WTC11 (cell line): ENCODE measurements at regions of chr14 and their contacts with region 1.

Region 1: DNA sequence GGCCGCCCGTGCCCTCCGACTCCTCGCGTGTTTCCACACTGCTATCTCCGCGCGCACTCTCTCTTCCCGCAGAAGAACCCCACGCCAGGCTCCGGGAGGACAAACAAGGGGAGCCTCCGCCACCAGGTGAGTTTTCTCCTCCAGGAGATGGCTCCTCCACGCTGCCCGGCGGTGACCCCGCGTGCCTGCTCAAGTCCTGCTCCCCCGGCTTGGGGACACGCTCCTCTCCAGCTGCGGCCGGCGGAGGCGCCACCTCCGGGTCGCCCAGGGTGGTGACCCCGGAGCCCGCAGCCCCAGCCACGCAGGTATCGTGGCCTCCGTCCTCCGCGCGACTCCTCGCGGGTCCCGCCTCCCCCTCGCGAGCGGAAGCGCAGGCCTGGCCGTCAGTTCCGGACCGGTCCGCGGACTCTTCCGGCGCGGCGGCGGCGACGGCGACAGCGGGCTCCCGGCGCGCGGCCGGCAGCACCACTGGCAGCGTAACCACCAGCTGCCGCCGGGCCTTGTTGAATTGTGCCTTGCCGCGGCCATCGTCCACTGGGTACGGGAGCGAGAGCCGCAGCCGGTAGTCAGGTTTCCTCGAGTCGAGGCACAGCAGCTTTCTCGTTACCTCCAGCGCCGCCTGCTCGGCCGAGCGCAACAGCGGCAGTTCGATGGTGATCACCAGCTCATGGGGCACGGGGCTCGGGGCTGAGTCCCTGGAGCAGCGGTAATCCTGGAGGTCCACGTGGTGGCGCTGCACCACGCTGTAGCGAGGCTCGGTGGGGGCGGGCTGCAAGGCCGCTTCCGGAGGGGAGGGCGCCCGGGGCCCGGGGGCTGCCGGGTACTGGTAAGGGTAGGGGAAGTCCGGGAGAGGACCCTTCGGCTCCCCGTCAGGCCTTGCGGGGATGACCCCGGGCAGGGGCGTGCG is 1.2 kb downstream of the DNAAF2 start:
- DNase-seq: peak; percentile 96
- ATAC-seq: peak; percentile 91
- H3K4me3 Mint-ChIP-seq: peak overlapping the region; percentile 96
- H3K27ac Mint-ChIP-seq: peak overlapping the region; percentile 98
- H3K4me1 Mint-ChIP-seq: peaks cover 25% of the 10 kb centered on the region
- H3K27me3 Mint-ChIP-seq: no peaks in the 10 kb centered on the region
- CTCF ChIP-seq: peak; percentile 79

Region 2: GRCh38 chr14:49620182-49621113 is 13.4 kb before region 1 on chr14 and contains the starts of genes MGAT2 and RPL36AL:
- CTCF ChIA-PET with region 1: interaction called, 24 read pairs
- POLR2A ChIA-PET with region 1: interaction called, 39 read pairs
- DNase-seq: peak; percentile 99
- ATAC-seq: peak; percentile 98
- H3K4me3 Mint-ChIP-seq: peak within 1 kb of the TSS; percentile 98
- H3K27ac Mint-ChIP-seq: peak within 1 kb of the TSS; percentile 98
- H3K4me1 Mint-ChIP-seq: peaks cover 23% of the 10 kb centered on the region
- H3K27me3 Mint-ChIP-seq: no peaks in the 10 kb centered on the region
- CTCF ChIP-seq: no peak
- total RNA-seq, gene MGAT2: 24.5 to 27.7 TPM (median 25.2 TPM) in 3 replicates
- total RNA-seq, gene RPL36AL: 173 to 212 TPM (median 177 TPM) in 3 replicates

Region 3: GRCh38 chr14:49687942-49688700 is 54.2 kb after region 1 on chr14 and contains the start of gene POLE2:
- CTCF ChIA-PET with region 1: interaction called, 13 read pairs
- POLR2A ChIA-PET with region 1: interaction called, 12 read pairs
- DNase-seq: peak; percentile 87
- ATAC-seq: peak; percentile 94
- H3K4me3 Mint-ChIP-seq: peak within 1 kb of the TSS; percentile 86
- H3K27ac Mint-ChIP-seq: peak within 1 kb of the TSS; percentile 96
- H3K4me1 Mint-ChIP-seq: peaks cover 34% of the 10 kb centered on the region
- H3K27me3 Mint-ChIP-seq: peaks cover 34% of the 10 kb centered on the region
- CTCF ChIP-seq: no peak
- total RNA-seq, gene POLE2: 24.0 to 24.6 TPM (median 24.4 TPM) in 3 replicates

Region 4: DNA sequence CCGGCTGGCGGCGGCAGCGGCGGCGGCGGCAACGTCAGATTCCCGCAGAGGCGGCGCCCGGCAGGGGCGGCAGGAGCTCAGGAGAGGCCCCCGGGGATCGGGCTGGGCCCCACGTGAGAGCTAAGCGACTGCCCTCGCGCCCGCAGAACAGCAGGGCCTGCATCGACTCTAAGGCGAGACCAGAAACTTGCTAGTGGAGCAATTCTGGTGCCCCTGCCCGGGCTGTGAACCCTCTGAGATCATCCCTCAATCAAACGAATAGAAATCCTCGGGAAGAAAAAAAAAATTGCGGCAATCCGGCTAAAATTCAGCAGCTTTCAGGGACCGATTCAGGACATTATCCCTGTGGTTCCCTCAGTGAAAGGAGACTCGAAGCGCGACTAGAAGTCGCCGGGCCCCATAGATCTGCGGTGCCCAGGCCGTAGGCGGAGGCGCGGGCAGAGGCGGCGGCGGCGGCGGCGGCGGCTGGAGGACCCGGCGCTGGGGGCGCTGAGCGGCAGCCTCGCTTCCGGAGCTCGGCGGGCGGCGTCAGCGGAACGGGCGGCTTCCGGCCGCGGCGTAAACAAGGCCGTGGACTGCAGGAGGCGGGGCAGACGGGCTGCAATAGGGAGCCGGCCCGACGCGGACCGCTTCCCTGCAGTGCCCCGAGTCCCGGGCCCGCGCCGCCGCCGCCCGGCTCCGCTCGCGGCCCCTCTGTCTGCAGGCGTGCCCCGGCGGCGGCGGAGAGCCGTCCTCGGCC is 133.8 kb after region 1 on chr14 and contains the start of gene KLHDC2:
- CTCF ChIA-PET with region 1: interaction called, 23 read pairs
- POLR2A ChIA-PET with region 1: interaction called, 17 read pairs
- DNase-seq: peak; percentile 87
- ATAC-seq: peak; percentile 88
- H3K4me3 Mint-ChIP-seq: peak within 1 kb of the TSS; percentile 98
- H3K27ac Mint-ChIP-seq: peak within 1 kb of the TSS; percentile 100
- H3K4me1 Mint-ChIP-seq: peaks cover 24% of the 10 kb centered on the region
- H3K27me3 Mint-ChIP-seq: no peaks in the 10 kb centered on the region
- CTCF ChIP-seq: no peak
- total RNA-seq, gene KLHDC2: 38.7 to 47.6 TPM (median 42.5 TPM) in 3 replicates

Region 5: DNA sequence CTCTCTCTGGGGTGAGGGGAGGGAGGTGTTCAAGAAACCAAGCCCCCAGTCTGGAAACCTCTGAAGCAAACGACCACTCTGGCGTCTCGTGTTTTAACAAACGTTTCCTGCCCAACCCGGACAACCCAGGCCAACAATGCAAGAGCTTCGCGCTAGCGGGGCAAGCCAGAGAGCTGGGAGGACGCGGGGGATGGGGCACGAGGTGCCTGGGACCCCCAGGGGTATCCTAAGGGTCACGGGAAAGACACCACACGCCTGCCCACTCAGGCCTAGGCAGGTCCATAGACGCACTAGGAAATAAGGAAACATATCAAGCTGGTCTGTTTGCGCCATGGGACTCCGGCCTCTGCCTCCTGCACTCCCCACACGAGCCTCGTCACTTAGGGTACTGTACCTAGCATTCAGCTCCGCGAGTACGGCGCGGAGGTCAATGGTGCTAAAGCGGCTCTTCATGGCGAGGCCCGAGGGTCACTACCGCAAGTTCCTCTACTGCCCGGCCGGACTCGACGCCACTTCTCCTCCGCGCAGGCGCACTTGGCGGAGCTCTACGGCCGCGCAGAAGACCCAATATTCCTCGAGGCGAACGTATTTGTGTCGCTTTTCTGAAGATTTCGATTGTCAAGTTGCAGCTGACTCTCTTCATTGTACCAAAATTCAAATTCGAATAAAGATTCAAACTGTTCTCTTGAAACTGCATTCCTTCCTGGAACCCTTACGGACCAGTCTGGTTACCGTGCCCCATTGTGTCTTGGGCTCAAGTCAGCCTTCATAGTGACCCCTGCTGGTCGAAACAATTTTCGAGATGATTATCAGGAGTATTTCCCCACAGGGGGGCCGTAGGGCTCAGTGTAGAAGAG is 218.6 kb after region 1 on chr14 and contains the start of gene NEMF:
- CTCF ChIA-PET with region 1: interaction called, 31 read pairs
- POLR2A ChIA-PET with region 1: no interaction called
- DNase-seq: peak; percentile 82
- ATAC-seq: peak; percentile 72
- H3K4me3 Mint-ChIP-seq: peak within 1 kb of the TSS; percentile 95
- H3K27ac Mint-ChIP-seq: peak within 1 kb of the TSS; percentile 95
- H3K4me1 Mint-ChIP-seq: peaks cover 10% of the 10 kb centered on the region
- H3K27me3 Mint-ChIP-seq: no peaks in the 10 kb centered on the region
- CTCF ChIP-seq: no peak
- total RNA-seq, gene NEMF: 50.1 to 51.2 TPM (median 50.1 TPM) in 3 replicates

Region 6: GRCh38 chr14:50798048-50798421 is 1164.1 kb after region 1 on chr14:
- CTCF ChIA-PET with region 1: no interaction called
- POLR2A ChIA-PET with region 1: interaction called, 10 read pairs
- DNase-seq: no peak
- ATAC-seq: 0 out of 2 replicates have a peak, but pooled peaks have one; percentile 22
- H3K4me3 Mint-ChIP-seq: no peak overlapping the region
- H3K27ac Mint-ChIP-seq: no peak overlapping the region
- H3K4me1 Mint-ChIP-seq: peaks cover 27% of the 10 kb centered on the region
- H3K27me3 Mint-ChIP-seq: no peaks in the 10 kb centered on the region
- CTCF ChIP-seq: no peak